T-cell (primary cell): ENCODE measurements at regions of chr12 and their contacts with region 1.

Region 1: DNA sequence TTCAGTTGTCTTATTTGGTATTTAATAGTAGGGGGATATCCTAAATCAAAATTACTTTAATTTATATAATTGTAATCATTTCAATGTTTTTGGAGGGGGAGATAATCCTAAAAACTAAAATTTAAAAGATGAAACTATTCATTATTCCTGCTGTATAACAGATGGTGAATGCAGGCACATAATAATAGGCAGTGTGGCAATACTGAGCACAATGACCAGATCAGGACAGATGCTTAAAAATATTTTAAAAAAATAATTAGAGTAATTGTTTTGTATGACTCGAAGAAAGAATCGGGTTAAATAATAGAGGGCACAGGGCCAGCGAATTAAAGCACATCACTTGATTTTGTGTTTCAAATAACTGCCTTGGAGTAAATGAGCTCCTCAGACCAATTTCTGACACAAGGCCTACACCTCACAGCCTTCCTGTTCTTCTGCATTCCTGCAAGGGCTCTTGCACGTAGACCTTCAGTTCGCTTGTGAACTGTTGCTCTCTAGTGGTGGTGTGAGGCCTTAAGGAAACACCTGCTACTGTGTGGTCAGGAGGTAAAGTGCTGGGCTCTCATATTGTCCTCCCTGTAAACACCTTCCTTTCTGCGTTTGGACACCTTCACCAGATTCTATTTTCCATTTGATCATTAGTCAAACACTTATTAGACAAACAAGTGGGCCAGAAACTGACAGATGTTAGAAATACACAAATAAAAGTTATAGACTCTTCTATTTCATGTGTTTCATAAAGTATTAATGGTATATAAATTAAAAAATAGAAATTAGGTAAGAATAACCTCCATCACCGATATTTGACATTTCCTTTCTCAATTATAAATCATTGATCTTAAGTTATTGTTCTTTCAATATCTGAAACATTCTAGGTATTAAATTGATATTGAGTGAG is 29.3 kb upstream of the KLRF1 start:
- DNase-seq: peak; percentile 29 to 87 (median 59)
- ATAC-seq: peak; percentile 92 to 98 (median 94)
- H3K4me3 ChIP-seq: no peak overlapping the region
- H3K4me3 Mint-ChIP-seq: peak overlapping the region in 1 of 3 donors; percentile 40
- H3K27ac ChIP-seq: peak overlapping the region; percentile 54
- H3K27ac Mint-ChIP-seq: peak overlapping the region; percentile 24 to 75
- H3K4me1 ChIP-seq: peaks cover 10 to 42% of the 10 kb centered on the region in 2 experiments
- H3K4me1 Mint-ChIP-seq: peaks cover 47 to 51% (median 49%) of the 10 kb centered on the region in 3 donors
- H3K27me3 ChIP-seq: no peaks in the 10 kb centered on the region
- H3K27me3 Mint-ChIP-seq: no peaks in the 10 kb centered on the region

Region 2: DNA sequence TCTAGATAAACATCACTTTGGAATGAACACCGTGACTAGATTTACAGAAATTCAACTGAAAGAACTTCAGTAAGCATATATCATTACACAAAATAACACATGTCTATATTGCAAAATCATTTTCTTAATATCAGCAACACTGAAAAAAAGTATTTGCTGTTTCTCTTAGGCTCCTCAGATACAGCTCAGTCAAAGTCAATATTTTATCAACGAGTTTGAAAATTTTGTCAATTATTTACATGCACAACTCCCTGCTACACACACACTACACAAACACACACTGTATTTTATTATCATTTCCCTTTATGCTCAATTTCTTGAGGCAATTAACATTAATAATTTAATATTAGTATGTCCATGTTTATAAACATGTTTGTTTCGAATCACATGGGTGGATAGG is 593.6 kb before region 1 on chr12:
- CTCF ChIA-PET with region 1: no interaction called
- POLR2A ChIA-PET with region 1: no interaction called
- DNase-seq: no peak
- ATAC-seq: no peak
- H3K4me3 ChIP-seq: no peak overlapping the region
- H3K4me3 Mint-ChIP-seq: no peak overlapping the region
- H3K27ac ChIP-seq: no peak overlapping the region
- H3K27ac Mint-ChIP-seq: no peak overlapping the region
- H3K4me1 ChIP-seq: no peaks in the 10 kb centered on the region
- H3K4me1 Mint-ChIP-seq: no peaks in the 10 kb centered on the region
- H3K27me3 ChIP-seq: no peaks in the 10 kb centered on the region
- H3K27me3 Mint-ChIP-seq: no peaks in the 10 kb centered on the region

Region 3: GRCh38 chr12:9782547-9783382 is 15.2 kb before region 1 on chr12:
- CTCF ChIA-PET with region 1: interaction called in 1 of 2 experiments, 15 read pairs
- POLR2A ChIA-PET with region 1: interaction called in 1 of 2 experiments, 5 read pairs
- DNase-seq: no peak
- ATAC-seq: no peak
- H3K4me3 ChIP-seq: no peak overlapping the region
- H3K4me3 Mint-ChIP-seq: no peak overlapping the region
- H3K27ac ChIP-seq: no peak overlapping the region
- H3K27ac Mint-ChIP-seq: no peak overlapping the region
- H3K4me1 ChIP-seq: peaks cover 5 to 12% of the 10 kb centered on the region in 2 experiments
- H3K4me1 Mint-ChIP-seq: peaks cover 48 to 60% (median 59%) of the 10 kb centered on the region in 3 donors
- H3K27me3 ChIP-seq: no peaks in the 10 kb centered on the region
- H3K27me3 Mint-ChIP-seq: no peaks in the 10 kb centered on the region

Region 4: GRCh38 chr12:9808504-9808903 is 10.5 kb after region 1 on chr12:
- CTCF ChIA-PET with region 1: interaction called, 6 to 14 read pairs
- POLR2A ChIA-PET with region 1: no interaction called
- DNase-seq: no peak
- ATAC-seq: no peak
- H3K4me3 ChIP-seq: no peak overlapping the region
- H3K4me3 Mint-ChIP-seq: no peak overlapping the region
- H3K27ac ChIP-seq: no peak overlapping the region
- H3K27ac Mint-ChIP-seq: no peak overlapping the region
- H3K4me1 ChIP-seq: peaks cover 4 to 5% of the 10 kb centered on the region in 2 experiments
- H3K4me1 Mint-ChIP-seq: peaks cover 2 to 8% (median 3%) of the 10 kb centered on the region in 3 donors
- H3K27me3 ChIP-seq: peaks cover 0 to 3% of the 10 kb centered on the region in 2 experiments
- H3K27me3 Mint-ChIP-seq: peaks cover 12 to 13% of the 10 kb centered on the region in 2 donors